ENCODE measurements at regions of chrX and their contacts with region 1.

Region 1: DNA sequence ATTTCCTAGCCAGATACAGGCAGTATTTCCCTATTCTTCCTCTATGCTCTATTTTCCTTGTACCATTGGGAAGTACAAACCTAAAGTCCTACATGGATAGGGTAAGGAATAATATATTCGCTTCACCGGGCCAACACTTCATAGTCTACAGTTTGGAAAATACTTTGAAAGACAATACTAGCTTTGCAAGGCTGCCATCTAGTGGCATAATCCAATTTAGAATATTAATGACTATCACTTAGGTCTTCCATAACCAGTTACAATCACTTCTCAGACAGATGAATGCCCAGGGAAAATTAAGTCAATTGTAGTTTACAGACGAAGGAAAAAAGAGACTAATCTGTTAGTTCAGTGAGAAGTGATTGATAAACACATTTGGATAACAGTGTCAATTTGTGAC is 141.0 kb upstream of the FAM47C start:
- DNase-seq: peak; percentile 9
- ATAC-seq: peak; percentile 60
- H3K4me3 ChIP-seq: no peak overlapping the region
- H3K27ac ChIP-seq: no peak overlapping the region
- H3K4me1 ChIP-seq: no peaks in the 10 kb centered on the region
- H3K27me3 ChIP-seq: no peaks in the 10 kb centered on the region
- CTCF ChIP-seq: peak; percentile 57
- POLR2A ChIP-seq: no peak
- RAD21 ChIP-seq: peak; percentile 57

Region 2: DNA sequence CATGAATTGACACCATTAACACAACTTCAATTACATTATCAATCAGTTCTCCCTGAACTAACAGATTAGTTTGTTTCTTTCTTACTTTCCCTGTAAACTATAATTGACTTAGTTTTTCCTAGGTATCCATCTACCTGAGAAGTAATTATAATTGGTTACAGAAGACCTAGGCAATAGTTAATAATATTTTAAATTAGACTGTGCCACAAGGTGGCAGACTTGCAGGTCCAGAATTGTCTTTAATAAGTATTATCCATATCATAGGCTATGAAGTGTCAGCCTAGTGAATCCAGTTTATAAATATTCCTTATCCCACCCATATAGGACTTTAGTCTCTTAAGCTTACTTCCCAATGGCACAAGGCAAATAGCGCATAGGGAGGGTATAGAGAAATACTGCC is 1973.4 kb before region 1 on chrX:
- CTCF ChIA-PET with region 1: no interaction called
- POLR2A ChIA-PET with region 1: no interaction called
- dilution Hi-C with region 1: no loop called
- in situ Hi-C with region 1: no loop called
- intact Hi-C with region 1: loop called (anchors 10 kb)
- DNase-seq: peak; percentile 16
- ATAC-seq: peak; percentile 71; the same call in 1 of the 2 replicates
- H3K4me3 ChIP-seq: no peak overlapping the region
- H3K27ac ChIP-seq: no peak overlapping the region
- H3K4me1 ChIP-seq: no peaks in the 10 kb centered on the region
- H3K27me3 ChIP-seq: no peaks in the 10 kb centered on the region
- CTCF ChIP-seq: peak; percentile 46
- POLR2A ChIP-seq: no peak
- RAD21 ChIP-seq: peak; percentile 46

Region 3: GRCh38 chrX:35380808-35381700 is 1486.1 kb before region 1 on chrX:
- CTCF ChIA-PET with region 1: no interaction called
- POLR2A ChIA-PET with region 1: no interaction called
- dilution Hi-C with region 1: no loop called
- in situ Hi-C with region 1: loop called (anchors 25 kb)
- intact Hi-C with region 1: loop called (anchors 10 kb)
- DNase-seq: peak; percentile 20
- ATAC-seq: no peak
- H3K4me3 ChIP-seq: no peak overlapping the region
- H3K27ac ChIP-seq: no peak overlapping the region
- H3K4me1 ChIP-seq: no peaks in the 10 kb centered on the region
- H3K27me3 ChIP-seq: no peaks in the 10 kb centered on the region
- CTCF ChIP-seq: peak; percentile 35
- POLR2A ChIP-seq: no peak
- RAD21 ChIP-seq: no peak

Region 4: GRCh38 chrX:35890699-35891098 is 976.4 kb before region 1 on chrX:
- CTCF ChIA-PET with region 1: no interaction called
- POLR2A ChIA-PET with region 1: no interaction called
- dilution Hi-C with region 1: no loop called
- in situ Hi-C with region 1: no loop called
- intact Hi-C with region 1: loop called (anchors 10 kb)
- DNase-seq: peak; percentile 11
- ATAC-seq: no peak
- H3K4me3 ChIP-seq: no peak overlapping the region
- H3K27ac ChIP-seq: no peak overlapping the region
- H3K4me1 ChIP-seq: no peaks in the 10 kb centered on the region
- H3K27me3 ChIP-seq: no peaks in the 10 kb centered on the region
- CTCF ChIP-seq: peak; percentile 53
- POLR2A ChIP-seq: no peak
- RAD21 ChIP-seq: peak; percentile 66

Measured in IMR-90 (cell line).